CD4-positive, alpha-beta T cell (primary cell): ENCODE measurements at regions of chr17 and their contacts with region 1.

Region 1: DNA sequence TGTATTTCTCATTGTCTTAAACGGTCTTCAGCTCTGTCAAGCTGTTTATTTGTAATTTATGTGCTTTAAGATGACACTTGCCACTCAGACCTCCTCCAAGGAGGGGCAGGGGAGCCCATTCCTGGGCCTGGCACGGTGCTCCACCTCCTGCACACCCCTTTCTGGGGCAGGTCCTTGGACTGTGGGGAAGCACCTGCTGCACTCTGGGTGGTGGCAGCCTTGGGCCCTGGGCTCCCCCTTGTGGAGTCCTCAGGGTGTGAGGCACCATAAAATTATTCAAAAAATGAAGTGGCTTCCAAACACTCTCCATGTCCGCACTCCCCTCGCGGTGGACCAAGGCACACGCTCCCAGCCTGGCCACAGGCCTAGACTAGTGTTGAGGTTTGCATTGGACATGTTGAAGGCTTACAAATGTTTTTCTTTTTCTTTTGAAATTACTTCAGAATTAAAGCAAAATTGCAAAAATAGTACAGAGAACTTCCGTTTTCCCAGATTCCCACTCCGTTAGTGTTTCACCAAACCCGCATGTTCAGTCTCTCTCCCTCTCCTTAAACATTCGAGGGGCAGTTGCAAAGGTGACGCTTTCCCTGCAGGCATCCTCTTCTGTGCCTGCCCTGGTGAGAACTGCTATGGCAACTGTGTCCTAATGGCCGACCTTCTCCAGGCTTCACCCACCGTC is 32.4 kb downstream of the FOXK2 start:
- DNase-seq: peak; percentile 59 to 88 (median 76)
- ATAC-seq: peak; percentile 100
- H3K4me3 ChIP-seq: no peak overlapping the region
- H3K4me3 Mint-ChIP-seq: no peak overlapping the region
- H3K27ac ChIP-seq: no peak overlapping the region
- H3K27ac Mint-ChIP-seq: peak overlapping the region; percentile 56
- H3K4me1 ChIP-seq: peaks cover 24% of the 10 kb centered on the region
- H3K4me1 Mint-ChIP-seq: peaks cover 40% of the 10 kb centered on the region
- H3K27me3 ChIP-seq: no peaks in the 10 kb centered on the region
- H3K27me3 Mint-ChIP-seq: no peaks in the 10 kb centered on the region
- CTCF ChIP-seq: peak; percentile 77

Region 2: GRCh38 chr17:82030470-82031302 is 521.2 kb before region 1 on chr17:
- CTCF ChIA-PET with region 1: interaction called, 3 read pairs
- POLR2A ChIA-PET with region 1: no interaction called
- intact Hi-C with region 1: loop called (anchors 1 to 10 kb)
- DNase-seq: peak; percentile 73 to 92 (median 81)
- ATAC-seq: peak; percentile 85
- H3K4me3 ChIP-seq: peak overlapping the region; percentile 53
- H3K4me3 Mint-ChIP-seq: peak overlapping the region; percentile 91
- H3K27ac ChIP-seq: no peak overlapping the region
- H3K27ac Mint-ChIP-seq: no peak overlapping the region
- H3K4me1 ChIP-seq: peaks cover 28% of the 10 kb centered on the region
- H3K4me1 Mint-ChIP-seq: peaks cover 21% of the 10 kb centered on the region
- H3K27me3 ChIP-seq: no peaks in the 10 kb centered on the region
- H3K27me3 Mint-ChIP-seq: no peaks in the 10 kb centered on the region
- CTCF ChIP-seq: peak; percentile 97

Region 3: DNA sequence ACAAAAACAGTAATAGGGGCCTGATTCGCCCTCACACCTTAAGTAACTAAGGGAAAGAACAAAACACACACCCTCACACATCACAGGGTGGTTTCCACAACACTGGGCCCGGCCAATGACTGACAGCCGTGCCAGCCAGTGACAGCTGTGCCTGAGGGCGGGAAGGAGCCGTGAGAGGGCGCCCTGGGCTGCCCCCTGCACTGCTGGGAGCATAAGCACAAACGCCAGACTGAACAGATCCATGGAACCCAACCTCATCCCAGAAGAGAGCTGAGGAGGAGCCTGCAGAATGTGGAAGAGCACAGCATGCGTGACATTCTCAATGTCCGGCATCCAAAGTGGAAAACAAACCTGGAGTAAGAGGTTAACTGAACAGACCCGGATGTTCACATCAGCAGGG is 294.4 kb before region 1 on chr17:
- CTCF ChIA-PET with region 1: no interaction called
- POLR2A ChIA-PET with region 1: no interaction called
- intact Hi-C with region 1: no loop called
- DNase-seq: peak in 9 of 14 experiments; percentile 27 to 78 (median 59)
- ATAC-seq: peak; percentile 86
- H3K4me3 ChIP-seq: no peak overlapping the region
- H3K4me3 Mint-ChIP-seq: no peak overlapping the region
- H3K27ac ChIP-seq: no peak overlapping the region
- H3K27ac Mint-ChIP-seq: peak overlapping the region; percentile 80
- H3K4me1 ChIP-seq: peaks cover 7% of the 10 kb centered on the region
- H3K4me1 Mint-ChIP-seq: peaks cover 23% of the 10 kb centered on the region
- H3K27me3 ChIP-seq: no peaks in the 10 kb centered on the region
- H3K27me3 Mint-ChIP-seq: no peaks in the 10 kb centered on the region
- CTCF ChIP-seq: no peak